ENCODE measurements at regions of chr9 and their contacts with region 1.

Region 1: DNA sequence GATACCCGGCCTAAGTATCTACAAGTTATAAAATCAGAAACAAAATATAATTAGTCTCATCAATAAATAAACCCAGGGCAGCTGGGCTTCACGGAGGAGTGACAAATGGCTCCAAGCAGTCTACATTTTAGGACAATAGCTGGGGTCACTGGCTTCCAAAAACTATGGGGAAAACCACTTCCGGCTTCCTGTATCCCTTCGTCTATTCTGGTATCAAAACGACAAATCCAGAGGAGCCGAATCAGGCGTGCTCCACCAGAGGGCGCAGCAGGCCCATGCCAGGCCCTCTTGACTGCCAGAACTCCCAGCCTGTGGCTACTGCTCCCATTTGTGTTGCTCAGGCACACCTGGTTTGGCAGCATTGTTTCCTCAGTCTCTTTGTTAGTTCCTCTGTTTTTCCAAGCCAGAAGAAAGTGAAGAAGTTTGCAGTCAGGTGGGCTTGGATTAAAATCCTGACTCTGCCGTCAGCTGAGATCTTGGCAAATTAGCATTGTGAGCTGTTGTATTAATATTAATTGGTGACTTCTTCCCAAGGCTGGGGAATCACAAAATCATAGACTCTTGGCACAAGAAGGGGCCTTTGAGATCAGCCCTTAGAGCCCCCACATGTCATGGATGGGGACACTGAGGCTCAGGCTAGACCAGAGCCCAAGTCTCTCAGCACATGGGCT is 11.6 kb upstream of the RAB14 start:
- DNase-seq: peak; percentile 70 to 72 (median 70)
- H3K4me3 ChIP-seq: peak overlapping the region in 1 of 7 experiments; percentile 9
- H3K27ac ChIP-seq: no peak overlapping the region
- H3K4me1 ChIP-seq: peaks cover 8 to 25% (median 19%) of the 10 kb centered on the region in 4 experiments
- H3K27me3 ChIP-seq: no peaks in the 10 kb centered on the region

Region 2: DNA sequence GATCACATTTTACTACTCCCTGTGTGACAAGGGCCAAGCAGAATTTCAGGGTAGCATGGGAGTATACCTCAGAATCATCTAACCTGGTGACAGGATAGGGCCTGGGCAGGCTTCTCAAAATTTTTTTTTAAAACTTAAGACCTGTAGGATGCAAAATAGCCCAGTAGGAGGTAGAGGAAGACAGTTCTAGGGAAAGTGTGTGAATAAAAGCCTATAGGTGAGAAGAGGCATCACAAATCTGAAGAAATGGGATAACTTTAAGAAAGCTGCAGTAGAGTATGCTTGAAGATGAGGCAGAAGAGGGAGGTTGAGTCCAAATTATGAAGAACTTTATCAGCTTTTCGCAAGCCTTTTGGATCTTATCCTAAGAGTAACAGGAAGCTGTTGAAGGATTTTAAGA is 106.2 kb before region 1 on chr9:
- CTCF ChIA-PET with region 1: no interaction called
- POLR2A ChIA-PET with region 1: no interaction called
- DNase-seq: peak; percentile 57 to 80 (median 68)
- H3K4me3 ChIP-seq: peak overlapping the region in 1 of 7 experiments; percentile 10
- H3K27ac ChIP-seq: peak overlapping the region in 1 of 2 experiments; percentile 36
- H3K4me1 ChIP-seq: peaks cover 32 to 56% (median 44%) of the 10 kb centered on the region in 4 experiments
- H3K27me3 ChIP-seq: no peaks in the 10 kb centered on the region

Region 3: GRCh38 chr9:121201045-121201737 is 12.1 kb before region 1 on chr9:
- CTCF ChIA-PET with region 1: interaction called, 22 read pairs
- POLR2A ChIA-PET with region 1: interaction called, 3 read pairs
- DNase-seq: peak in 2 of 3 donors; percentile 35 to 52
- H3K4me3 ChIP-seq: peak overlapping the region; percentile 80 to 98 (median 89)
- H3K27ac ChIP-seq: peak overlapping the region; percentile 82 to 91
- H3K4me1 ChIP-seq: peaks cover 26 to 49% (median 44%) of the 10 kb centered on the region in 4 experiments
- H3K27me3 ChIP-seq: no peaks in the 10 kb centered on the region

Region 4: GRCh38 chr9:121278535-121279261 is 65.4 kb after region 1 on chr9:
- CTCF ChIA-PET with region 1: interaction called, 82 read pairs
- POLR2A ChIA-PET with region 1: no interaction called
- DNase-seq: peak; percentile 59 to 87 (median 83)
- H3K4me3 ChIP-seq: peak overlapping the region in 1 of 7 experiments; percentile 29
- H3K27ac ChIP-seq: no peak overlapping the region
- H3K4me1 ChIP-seq: peaks cover 14 to 92% (median 68%) of the 10 kb centered on the region in 4 experiments
- H3K27me3 ChIP-seq: no peaks in the 10 kb centered on the region

Region 5: DNA sequence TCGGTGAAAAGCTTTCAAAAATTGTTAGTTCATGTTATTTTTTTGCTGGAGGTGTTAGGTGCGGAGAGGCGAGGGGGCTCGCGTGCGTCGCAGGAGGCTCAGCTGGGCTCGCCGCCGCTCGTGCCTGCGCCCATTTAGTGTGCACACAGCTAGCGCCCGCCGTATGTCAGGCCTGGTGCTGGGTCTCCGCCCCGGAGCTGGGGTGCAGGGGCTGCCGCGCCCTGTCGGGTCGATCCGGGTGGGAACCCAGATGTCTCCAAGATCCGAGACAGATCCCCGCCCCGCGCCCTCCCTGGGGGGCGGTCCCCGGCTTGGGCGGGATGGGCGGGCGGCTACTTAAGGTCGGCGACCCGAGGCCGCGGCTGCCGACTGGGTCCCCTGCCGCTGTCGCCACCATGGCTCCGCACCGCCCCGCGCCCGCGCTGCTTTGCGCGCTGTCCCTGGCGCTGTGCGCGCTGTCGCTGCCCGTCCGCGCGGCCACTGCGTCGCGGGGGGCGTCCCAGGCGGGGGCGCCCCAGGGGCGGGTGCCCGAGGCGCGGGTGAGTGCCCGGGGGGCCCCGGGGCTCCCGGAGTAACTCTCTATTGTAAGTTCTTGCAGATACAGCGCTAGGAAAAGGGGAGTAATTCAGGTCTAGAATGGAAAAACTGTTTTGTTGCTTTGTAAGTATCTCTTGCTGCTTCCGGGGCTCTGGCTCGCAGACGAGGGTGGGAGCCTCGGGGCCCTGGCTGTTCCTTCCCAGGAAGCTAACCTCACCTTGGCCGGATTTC is 86.4 kb after region 1 on chr9:
- CTCF ChIA-PET with region 1: interaction called, 23 read pairs
- POLR2A ChIA-PET with region 1: no interaction called
- DNase-seq: peak; percentile 29 to 72 (median 56)
- H3K4me3 ChIP-seq: peak overlapping the region; percentile 49 to 83 (median 60)
- H3K27ac ChIP-seq: peak overlapping the region in 1 of 2 experiments; percentile 27
- H3K4me1 ChIP-seq: peaks cover 4 to 36% (median 31%) of the 10 kb centered on the region in 4 experiments
- H3K27me3 ChIP-seq: peaks cover 0 to 2% (median 0%) of the 10 kb centered on the region in 5 experiments

Region 6: GRCh38 chr9:121399883-121400607 is 186.8 kb after region 1 on chr9:
- CTCF ChIA-PET with region 1: interaction called, 80 read pairs
- POLR2A ChIA-PET with region 1: interaction called, 3 read pairs
- DNase-seq: peak; percentile 75 to 90 (median 86)
- H3K4me3 ChIP-seq: no peak overlapping the region
- H3K27ac ChIP-seq: no peak overlapping the region
- H3K4me1 ChIP-seq: peaks cover 0 to 29% (median 5%) of the 10 kb centered on the region in 4 experiments
- H3K27me3 ChIP-seq: no peaks in the 10 kb centered on the region